Posterior cingulate gyrus (tissue), 11 donors: ENCODE measurements at regions of chr17 and their contacts with region 1.

Region 1: GRCh38 chr17:8118769-8119580 is 661 bp upstream of the ALOXE3 start:
- DNase-seq: peak; percentile 78 to 98 (median 91)

Region 2: DNA sequence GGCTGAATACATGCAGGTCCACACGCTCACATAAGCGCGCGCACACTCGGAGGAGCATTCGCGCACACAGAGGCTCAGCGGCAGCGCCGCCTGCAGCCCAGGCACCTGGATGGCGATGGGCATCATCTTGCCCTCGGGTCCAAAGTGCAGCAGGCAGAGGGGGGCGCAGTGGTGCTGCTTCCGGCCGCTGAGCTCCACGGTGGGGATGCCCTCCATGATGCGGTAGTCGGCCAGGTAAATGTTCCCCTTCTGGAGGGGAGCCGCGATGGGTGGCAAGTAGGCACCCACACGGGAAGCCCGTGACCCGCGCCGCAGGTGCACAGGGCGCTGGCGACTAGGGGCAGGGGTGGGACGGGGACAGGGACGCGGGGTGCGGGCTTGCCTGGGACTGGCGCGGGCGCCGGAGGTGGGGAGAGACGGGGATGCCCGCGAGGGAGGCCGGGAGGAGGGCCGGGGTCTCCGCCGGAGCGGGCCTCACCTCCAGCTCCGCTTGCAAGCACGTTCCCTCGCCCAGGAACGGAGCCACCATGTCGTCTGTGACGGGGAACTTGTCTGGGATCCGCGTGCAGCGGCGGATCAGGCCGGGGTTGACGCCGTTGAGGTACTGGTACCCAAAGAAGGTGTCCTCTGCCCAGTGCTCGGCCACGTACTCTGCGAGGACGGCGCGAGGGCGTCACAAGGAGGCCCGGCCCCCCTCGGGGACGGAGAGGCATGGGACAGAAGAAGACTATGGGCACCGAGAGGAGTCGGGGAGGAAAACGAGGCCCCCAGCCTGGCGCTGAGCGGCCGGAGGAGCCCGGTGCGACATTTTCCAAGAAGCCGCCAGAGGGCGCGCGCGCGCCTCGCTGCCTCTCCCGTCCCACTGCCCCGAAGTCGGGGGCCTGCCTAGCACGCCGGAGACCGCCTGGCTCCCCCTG is 39.4 kb before region 1 on chr17:
- intact Hi-C with region 1: loop called (anchors 2 kb)
- DNase-seq: peak; percentile 42 to 95 (median 77)

Region 3: GRCh38 chr17:8145811-8146210 is 26.8 kb after region 1 on chr17:
- intact Hi-C with region 1: no loop called
- DNase-seq: peak in 3 of 10 donors; percentile 38 to 67 (median 61)

Region 4: DNA sequence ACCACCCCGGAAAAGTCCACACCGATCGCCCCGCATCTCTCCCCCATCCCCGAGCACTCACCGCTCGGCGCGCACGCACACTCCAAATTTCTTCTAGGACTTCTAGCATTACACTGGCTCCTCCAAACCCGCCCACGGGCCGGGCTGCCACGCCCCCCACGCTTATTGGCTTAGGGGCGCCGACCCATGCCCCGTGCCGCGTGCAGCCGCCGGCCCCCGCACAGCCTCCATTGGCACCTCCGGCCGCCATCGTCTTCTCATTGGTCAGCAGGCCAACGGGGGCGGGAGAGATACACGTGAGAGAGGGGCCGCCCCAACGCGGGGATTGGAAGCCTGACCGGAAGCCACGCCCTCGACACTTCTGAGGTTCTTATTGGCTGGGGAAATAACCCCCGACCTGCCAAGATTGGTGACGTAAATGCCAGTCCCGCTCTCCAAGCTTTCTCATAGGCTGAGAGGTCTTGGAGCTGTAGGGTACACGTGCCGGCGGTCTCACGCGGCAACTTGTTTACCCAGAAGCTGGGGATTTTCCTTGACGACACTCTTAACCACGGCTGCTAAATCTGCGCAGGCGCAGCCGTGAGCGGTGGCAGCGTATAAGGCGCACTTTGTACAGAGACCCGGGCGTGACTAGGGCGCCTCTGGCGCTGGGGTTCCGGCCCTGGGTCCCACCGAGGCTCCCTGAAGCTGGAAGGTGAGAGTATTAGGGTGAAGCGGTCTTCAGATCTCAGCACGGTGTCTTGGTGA is 37.4 kb after region 1 on chr17:
- intact Hi-C with region 1: loop called (anchors 5 kb)
- DNase-seq: peak; percentile 98 to 100 (median 99)

Region 5: GRCh38 chr17:8186787-8187516 is 68.0 kb after region 1 on chr17:
- intact Hi-C with region 1: loop called (anchors 2 kb)
- DNase-seq: peak; percentile 86 to 99 (median 91)

Region 6: DNA sequence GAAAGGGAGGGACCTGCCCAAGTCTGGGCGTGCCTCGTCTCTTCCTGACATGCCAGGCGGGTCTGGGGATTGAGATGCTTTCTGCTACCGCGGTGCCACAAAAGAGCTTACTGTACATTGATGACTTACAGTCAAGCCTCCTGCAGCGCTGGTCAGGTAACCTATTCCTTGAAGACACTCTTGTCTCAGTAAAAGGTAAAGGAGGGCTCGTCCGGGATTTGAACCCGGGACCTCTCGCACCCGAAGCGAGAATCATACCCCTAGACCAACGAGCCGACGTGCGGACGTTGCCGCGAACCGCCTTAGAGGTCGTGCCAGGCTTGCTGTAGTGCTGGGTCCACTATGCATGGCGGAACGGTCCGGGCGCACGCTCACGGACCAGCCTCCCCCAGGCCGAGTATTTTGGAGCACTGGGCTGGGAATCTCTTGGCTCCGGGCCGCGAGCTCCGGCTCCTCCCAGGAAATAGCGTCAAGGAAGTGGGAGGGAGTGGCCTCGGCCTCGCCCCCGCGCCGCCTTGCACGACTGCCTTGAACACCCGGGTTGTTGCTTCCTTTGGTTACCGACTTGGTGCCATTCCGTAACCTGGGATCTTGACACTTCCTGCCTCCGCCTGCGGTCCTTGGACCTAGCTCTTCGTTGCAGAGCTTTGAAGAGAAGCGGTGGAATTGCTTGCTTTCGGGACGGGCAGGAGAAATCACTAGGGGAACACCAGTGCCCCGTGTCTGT is 103.8 kb after region 1 on chr17:
- intact Hi-C with region 1: loop called (anchors 2 kb)
- DNase-seq: peak; percentile 88 to 99 (median 93)

Region 7: DNA sequence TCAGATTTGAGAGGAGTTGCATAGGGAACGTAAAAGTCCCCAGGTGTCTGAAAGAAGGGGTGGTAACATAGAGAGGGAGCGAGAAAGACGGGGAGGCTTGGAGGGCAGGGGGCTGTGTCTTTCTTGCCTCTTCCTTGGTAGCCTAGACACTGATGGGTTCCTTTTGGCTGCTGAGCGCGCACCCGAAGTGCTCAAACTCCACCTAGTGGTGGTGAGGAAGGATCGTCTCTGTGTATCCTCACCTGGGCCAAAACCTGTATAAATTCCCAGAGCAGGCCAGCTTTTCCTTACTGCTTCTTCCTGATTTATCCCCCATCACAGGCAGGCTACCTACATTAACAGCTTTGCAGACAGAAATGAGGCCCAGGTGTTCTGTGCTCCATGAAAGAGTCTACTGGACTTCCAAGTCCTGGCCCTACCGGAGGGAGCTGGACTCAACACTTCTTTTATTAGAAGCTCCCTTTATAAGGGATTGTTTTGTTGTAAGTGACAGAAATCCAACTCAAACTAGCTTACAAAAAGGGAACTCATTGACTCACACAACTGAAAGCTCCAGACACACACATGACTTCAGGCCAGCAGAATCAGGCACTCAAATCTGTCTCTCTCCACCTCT is 181.8 kb after region 1 on chr17:
- intact Hi-C with region 1: loop called (anchors 5 kb)
- DNase-seq: peak in 9 of 10 donors; percentile 40 to 95 (median 62)

Region 8: DNA sequence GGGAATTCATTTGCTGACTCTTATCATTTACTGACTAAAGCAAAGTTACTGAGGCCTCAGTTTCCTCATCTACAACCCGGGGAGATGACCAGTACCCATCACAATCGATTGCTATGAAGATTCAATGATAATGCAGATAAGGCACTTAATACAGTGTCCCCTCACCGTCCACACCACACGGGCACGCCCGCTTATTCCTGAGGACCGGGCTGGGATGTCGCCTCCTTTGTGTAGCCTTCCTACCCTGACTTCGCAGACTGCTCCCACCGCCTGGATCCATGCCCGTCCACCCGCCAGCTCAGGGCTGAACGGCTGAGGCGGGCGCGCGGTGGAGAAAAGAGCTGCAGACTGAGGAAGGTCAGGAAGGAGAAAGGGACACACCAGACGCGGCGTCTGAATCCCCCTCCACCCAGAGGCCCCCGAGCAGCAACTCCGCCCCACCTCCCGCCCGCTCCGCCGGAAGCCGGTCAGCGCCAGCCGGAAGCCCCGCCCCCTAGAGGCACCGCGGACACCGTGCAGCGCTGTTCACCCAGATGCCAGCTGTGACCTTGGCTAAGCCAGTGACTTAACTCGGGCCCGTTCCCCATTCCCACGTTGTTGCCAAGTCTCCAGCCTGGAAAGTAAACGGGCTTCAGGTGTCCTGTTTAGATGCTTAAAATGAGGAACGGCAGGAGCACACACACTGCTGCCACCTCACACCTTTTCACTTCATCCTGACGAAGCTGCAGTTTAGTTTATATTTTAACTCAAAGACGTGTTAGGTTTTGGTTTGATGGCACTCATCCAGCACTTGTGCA is 257.5 kb after region 1 on chr17 and contains the start of gene KRABD2:
- intact Hi-C with region 1: loop called (anchors 10 kb)
- DNase-seq: peak; percentile 82 to 99 (median 92)